Activated CD4-positive, alpha-beta memory T cell treated with anti-CD3 and anti-CD28 coated beads, Interleukin-2, amount 10 ng/mL, durations not matched to agents 7 days and 5 days (primary cell): ENCODE measurements at regions of chr6 and their contacts with region 1.

Region 1: DNA sequence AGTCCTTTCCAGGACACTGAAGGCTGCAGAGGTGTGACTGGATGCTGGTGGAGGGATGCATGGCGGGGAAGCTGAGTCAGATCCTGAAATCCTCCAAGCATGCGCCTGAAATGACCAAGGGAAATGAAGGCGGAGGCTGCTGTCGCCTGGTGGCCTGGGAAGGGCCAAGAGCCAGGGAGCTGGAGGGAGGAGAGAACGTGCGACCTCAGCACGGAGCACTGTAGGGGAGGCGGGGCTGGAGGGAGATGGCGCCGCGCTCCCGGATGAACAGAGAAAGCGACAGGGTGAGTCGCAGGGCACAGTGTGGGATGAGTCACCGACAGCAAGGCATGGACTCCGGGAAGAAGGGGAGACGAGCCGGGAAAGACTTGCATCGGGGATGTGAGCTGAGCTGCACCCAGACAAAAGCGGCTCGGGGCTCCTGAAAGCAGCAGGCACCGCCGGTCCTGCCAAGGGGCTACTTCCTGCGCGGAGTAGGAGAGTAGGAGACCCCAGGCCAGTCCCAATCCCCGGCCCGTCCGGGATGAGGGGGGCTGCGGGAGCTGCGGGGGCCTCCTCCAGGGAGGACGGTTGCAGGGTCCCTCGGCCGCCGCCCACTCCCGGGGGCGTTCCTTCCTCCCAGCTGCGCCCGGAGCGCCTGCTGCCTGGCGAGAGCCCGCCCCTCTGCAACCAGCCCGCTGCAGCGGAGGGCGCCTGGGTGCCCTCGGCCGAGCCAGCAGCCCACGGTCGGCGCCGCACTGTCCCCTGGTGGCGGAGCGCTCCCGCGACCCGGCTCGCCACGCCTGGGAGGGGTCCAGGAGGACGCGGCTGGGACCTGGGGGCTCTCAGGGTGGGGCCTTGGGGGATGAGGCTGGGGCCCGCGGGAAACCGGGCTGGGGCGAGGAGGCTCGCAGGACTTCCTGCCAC is 11.0 kb upstream of the NQO2 start:
- DNase-seq: peak; percentile 81
- H3K4me3 Mint-ChIP-seq: peak overlapping the region; percentile 87
- H3K27ac Mint-ChIP-seq: peak overlapping the region; percentile 95
- H3K4me1 Mint-ChIP-seq: peaks cover 27% of the 10 kb centered on the region
- H3K27me3 Mint-ChIP-seq: peaks cover 5% of the 10 kb centered on the region

Region 2: GRCh38 chr6:2765166-2765895 is 223.3 kb before region 1 on chr6 and contains the start of gene WRNIP1:
- CTCF ChIA-PET with region 1: interaction called, 12 read pairs
- POLR2A ChIA-PET with region 1: interaction called, 29 read pairs
- DNase-seq: peak; percentile 98
- H3K4me3 Mint-ChIP-seq: peak within 1 kb of the TSS; percentile 90
- H3K27ac Mint-ChIP-seq: peak within 1 kb of the TSS; percentile 96
- H3K4me1 Mint-ChIP-seq: peaks cover 50% of the 10 kb centered on the region
- H3K27me3 Mint-ChIP-seq: no peaks in the 10 kb centered on the region
- total RNA-seq, gene WRNIP1: 39.6 to 42.1 TPM

Region 3: DNA sequence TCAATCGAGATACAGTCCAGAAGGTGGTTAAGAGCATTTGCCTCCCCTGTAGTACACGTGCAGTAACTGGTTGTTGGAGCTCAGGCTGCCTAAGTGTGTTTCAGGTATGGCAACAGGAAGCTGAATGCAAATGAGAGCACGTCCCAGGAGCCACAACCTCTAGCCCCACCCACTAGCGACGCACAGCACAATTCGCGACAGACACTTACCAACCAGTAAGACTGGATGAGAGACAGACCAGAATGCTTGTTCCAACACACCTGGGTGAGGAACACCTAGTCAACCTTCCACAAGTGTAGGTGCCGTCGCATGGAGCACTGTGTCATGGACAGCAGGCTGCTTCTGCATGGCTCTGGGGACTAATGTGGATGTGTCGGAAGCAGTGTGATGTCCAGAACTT is 139.8 kb before region 1 on chr6:
- CTCF ChIA-PET with region 1: interaction called, 66 read pairs
- POLR2A ChIA-PET with region 1: interaction called, 57 read pairs
- DNase-seq: peak; percentile 81
- H3K4me3 Mint-ChIP-seq: peak overlapping the region; percentile 43
- H3K27ac Mint-ChIP-seq: peak overlapping the region; percentile 74
- H3K4me1 Mint-ChIP-seq: peaks cover 49% of the 10 kb centered on the region
- H3K27me3 Mint-ChIP-seq: no peaks in the 10 kb centered on the region

Region 4: GRCh38 chr6:2940010-2940850 is 48.4 kb before region 1 on chr6:
- CTCF ChIA-PET with region 1: interaction called, 13 read pairs
- POLR2A ChIA-PET with region 1: interaction called, 50 read pairs
- DNase-seq: peak; percentile 81
- H3K4me3 Mint-ChIP-seq: peak overlapping the region; percentile 69
- H3K27ac Mint-ChIP-seq: peak overlapping the region; percentile 94
- H3K4me1 Mint-ChIP-seq: peaks cover 57% of the 10 kb centered on the region
- H3K27me3 Mint-ChIP-seq: peaks cover 31% of the 10 kb centered on the region

Region 5: DNA sequence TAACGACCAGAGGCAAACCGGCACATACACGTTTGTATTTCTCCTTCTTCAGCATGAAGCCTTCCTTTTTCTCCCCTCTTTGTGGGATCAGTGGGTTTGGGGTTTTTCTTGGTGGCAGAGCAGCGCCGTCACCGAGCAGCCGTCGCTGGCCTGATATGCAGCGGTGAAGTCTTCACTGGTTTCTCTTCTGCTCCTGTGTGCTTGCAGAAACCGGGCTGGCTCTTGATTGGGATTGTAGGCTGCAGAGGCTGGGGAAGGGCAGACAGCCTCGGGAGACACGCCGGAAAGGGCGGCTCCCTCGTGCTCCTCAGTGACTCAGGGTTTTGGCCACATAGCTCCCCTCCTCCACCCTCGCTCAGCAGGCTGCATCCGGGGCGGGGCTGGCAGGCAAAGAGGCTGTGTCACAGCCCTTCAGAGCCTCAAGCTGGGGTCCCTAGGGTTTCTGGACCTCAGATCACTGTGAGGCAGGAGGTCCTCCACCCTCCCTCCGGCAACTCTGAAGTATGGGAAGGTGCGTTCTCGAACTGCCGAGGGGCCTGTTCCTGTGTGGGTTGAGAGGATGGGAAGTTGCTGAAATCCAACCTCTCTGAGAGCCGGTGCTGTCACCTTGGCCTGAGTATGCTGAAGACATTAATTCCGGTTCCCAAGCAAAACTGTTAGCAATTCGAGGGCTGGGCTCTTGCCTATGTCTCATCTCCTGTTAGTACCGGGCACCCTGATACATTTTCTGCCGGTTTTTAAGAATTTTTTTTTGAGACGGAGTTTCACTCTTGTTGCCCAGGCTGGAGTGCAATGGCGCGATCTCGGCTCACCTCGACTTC is 35.2 kb after region 1 on chr6:
- CTCF ChIA-PET with region 1: interaction called, 5 read pairs
- POLR2A ChIA-PET with region 1: interaction called, 21 read pairs
- DNase-seq: peak; percentile 94
- H3K4me3 Mint-ChIP-seq: peak overlapping the region; percentile 90
- H3K27ac Mint-ChIP-seq: peak overlapping the region; percentile 98
- H3K4me1 Mint-ChIP-seq: peaks cover 78% of the 10 kb centered on the region
- H3K27me3 Mint-ChIP-seq: no peaks in the 10 kb centered on the region

Region 6: GRCh38 chr6:3068329-3069214 is 79.9 kb after region 1 on chr6 and contains the start of gene RIPK1:
- CTCF ChIA-PET with region 1: interaction called, 9 read pairs
- POLR2A ChIA-PET with region 1: interaction called, 51 read pairs
- DNase-seq: peak; percentile 95
- H3K4me3 Mint-ChIP-seq: peak within 1 kb of the TSS; percentile 98
- H3K27ac Mint-ChIP-seq: peak within 1 kb of the TSS; percentile 99
- H3K4me1 Mint-ChIP-seq: peaks cover 76% of the 10 kb centered on the region
- H3K27me3 Mint-ChIP-seq: no peaks in the 10 kb centered on the region
- total RNA-seq, gene RIPK1: 33.1 to 33.3 TPM